Right ventricle myocardium inferior (tissue), 1 donor: ENCODE measurements at regions of chr15 and their contacts with region 1.

Region 1: GRCh38 chr15:74251131-74251811 is 15.1 kb downstream of the CCDC33 start:
- DNase-seq: peak; percentile 89
- ATAC-seq: peak; percentile 98

Region 2: DNA sequence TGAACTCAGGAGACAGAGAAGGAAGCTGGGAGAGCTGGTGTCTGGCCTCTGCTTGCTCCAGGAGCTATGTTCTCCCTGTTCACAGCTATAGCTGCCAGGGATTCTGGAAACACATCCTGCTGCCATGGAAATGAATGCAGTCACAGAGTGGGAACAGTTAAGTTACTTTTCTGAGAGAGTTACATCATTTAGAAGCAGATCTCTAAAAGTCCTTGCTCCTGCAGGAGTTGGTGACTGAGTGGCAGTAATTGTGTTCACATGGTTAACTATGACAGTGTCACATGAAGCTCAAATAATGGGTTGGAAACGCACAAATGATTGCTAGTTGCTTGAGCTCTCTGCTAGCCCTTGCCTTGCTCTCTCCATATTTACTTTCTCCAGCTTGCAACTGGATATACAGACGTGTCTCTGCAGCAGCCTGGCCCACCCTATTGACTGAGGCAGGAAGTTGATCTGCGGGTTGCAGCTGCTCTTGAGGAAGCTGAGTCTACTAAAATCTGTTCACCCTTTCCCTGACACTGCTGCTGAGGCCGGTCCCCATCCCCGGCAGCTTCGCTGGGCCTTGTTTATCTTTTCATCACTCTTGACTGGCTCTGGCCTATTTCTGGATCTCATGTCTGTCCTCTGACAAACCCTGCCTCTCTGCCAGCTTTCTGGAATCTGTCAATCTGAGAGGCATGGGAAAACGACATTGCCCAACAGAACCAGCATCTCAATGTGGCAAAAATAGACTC is 94.4 kb before region 1 on chr15:
- intact Hi-C with region 1: loop called (anchors 1 kb)
- DNase-seq: no peak
- ATAC-seq: peak; percentile 82

Region 3: GRCh38 chr15:74302821-74303359 is 51.6 kb after region 1 on chr15:
- intact Hi-C with region 1: loop called (anchors 5 kb)
- DNase-seq: peak; percentile 59
- ATAC-seq: peak; percentile 53

Region 4: GRCh38 chr15:74365611-74366440 is 114.6 kb after region 1 on chr15:
- intact Hi-C with region 1: no loop called
- DNase-seq: no peak
- ATAC-seq: peak; percentile 90

Region 5: GRCh38 chr15:74565381-74566085 is 314.3 kb after region 1 on chr15:
- intact Hi-C with region 1: no loop called
- DNase-seq: no peak
- ATAC-seq: no peak